ENCODE measurements at regions of chrX and their contacts with region 1.

Region 1: GRCh38 chrX:3811331-3812311 is 98.2 kb upstream of the PRKX start:
- DNase-seq: peak; percentile 28
- H3K4me3 ChIP-seq: no peak overlapping the region
- H3K27ac ChIP-seq: no peak overlapping the region
- H3K4me1 ChIP-seq: peaks cover 0 to 8% (median 3%) of the 10 kb centered on the region in 4 donors
- H3K27me3 ChIP-seq: peaks cover 8% of the 10 kb centered on the region
- CTCF ChIP-seq: peak in 4 of 5 experiments; percentile 5 to 48 (median 38)
- EP300 ChIP-seq: no peak
- POLR2A ChIP-seq: no peak

Region 2: GRCh38 chrX:2176733-2177132 is 1634.9 kb before region 1 on chrX:
- in situ Hi-C with region 1: no loop called
- intact Hi-C with region 1: loop called (anchors 5 kb)
- DNase-seq: no peak
- H3K4me3 ChIP-seq: no peak overlapping the region
- H3K27ac ChIP-seq: no peak overlapping the region
- H3K4me1 ChIP-seq: no peaks in the 10 kb centered on the region
- H3K27me3 ChIP-seq: no peaks in the 10 kb centered on the region
- CTCF ChIP-seq: no peak
- EP300 ChIP-seq: no peak
- POLR2A ChIP-seq: no peak

Region 3: DNA sequence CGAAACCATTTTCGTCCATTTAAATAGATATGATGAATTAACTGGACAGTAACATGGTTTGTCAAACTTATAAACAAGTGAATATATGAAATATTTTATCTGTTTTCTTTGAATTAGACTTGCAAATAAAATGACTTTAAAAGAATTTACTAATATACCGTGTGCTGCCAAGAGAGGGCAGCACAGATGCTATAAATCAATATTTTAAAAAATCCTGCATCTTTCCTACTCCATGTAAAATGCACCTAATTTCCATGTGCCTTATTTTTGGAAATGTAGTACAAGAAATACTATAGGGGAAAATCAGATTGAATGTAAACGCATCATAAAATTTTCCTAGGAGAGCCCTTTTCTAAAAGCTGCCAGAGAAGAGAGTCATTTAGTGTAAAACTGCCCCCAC is 160.3 kb before region 1 on chrX:
- in situ Hi-C with region 1: loop called in 2 of 4 experiments (anchors 10 kb)
- intact Hi-C with region 1: no loop called
- DNase-seq: no peak
- H3K4me3 ChIP-seq: no peak overlapping the region
- H3K27ac ChIP-seq: no peak overlapping the region
- H3K4me1 ChIP-seq: no peaks in the 10 kb centered on the region
- H3K27me3 ChIP-seq: no peaks in the 10 kb centered on the region
- CTCF ChIP-seq: peak; percentile 30 to 43 (median 39)
- EP300 ChIP-seq: no peak
- POLR2A ChIP-seq: no peak

Measured in transverse colon (tissue), 4 donors.